ENCODE measurements at regions of chr3 and their contacts with region 1.

Region 1: DNA sequence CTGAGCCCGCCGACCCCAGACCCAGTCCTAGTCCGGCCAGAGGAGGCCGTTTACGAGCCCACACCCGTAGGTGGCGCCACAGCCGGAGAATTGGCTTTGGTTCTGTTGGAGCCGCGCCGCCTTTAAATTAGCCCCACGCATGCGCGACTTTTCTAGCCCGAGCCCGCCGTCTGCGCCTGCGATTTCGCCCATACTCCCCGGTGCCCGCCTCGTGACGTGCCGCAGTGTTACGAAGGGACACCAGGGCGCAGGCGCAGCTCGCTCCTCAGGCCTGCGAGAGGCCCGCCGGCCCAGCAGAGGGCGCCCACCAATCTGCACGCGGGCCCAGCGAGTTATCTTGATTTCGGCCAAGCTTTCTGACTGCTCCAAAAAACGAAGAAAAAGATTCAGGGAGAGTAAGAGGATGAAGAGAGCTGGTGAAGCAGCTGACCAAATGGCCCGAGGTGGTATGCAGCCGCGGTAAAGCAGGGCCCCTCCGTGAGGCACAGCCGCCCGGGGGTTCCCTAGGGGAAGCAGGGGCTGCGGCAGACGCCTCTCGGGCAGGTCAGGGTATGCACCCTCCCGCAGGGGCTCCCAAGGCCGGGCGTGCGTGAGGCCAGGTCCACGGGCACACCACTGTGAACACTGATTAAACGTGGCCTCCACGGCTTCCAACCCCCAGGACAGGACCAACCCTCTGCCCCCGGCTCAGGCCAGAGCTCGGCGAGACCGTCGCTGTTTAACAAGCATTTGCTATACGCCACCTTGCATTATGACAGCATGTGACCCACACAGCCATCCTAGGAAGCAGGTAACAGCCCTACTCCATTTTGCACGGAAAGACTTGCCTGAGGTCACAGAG is 32.8 kb downstream of the RPN1 start:
- DNase-seq: peak; percentile 100
- H3K4me3 ChIP-seq: peak overlapping the region; percentile 78 to 88
- H3K27ac ChIP-seq: peak overlapping the region; percentile 79 to 89; a peak in 3 of 4 replicates
- H3K4me1 ChIP-seq: peaks cover 15% of the 10 kb centered on the region in 2 experiments
- H3K27me3 ChIP-seq: no peaks in the 10 kb centered on the region
- CTCF ChIP-seq: peak; percentile 92
- EP300 ChIP-seq: no peak
- RAD21 ChIP-seq: peak; percentile 76

Region 2: DNA sequence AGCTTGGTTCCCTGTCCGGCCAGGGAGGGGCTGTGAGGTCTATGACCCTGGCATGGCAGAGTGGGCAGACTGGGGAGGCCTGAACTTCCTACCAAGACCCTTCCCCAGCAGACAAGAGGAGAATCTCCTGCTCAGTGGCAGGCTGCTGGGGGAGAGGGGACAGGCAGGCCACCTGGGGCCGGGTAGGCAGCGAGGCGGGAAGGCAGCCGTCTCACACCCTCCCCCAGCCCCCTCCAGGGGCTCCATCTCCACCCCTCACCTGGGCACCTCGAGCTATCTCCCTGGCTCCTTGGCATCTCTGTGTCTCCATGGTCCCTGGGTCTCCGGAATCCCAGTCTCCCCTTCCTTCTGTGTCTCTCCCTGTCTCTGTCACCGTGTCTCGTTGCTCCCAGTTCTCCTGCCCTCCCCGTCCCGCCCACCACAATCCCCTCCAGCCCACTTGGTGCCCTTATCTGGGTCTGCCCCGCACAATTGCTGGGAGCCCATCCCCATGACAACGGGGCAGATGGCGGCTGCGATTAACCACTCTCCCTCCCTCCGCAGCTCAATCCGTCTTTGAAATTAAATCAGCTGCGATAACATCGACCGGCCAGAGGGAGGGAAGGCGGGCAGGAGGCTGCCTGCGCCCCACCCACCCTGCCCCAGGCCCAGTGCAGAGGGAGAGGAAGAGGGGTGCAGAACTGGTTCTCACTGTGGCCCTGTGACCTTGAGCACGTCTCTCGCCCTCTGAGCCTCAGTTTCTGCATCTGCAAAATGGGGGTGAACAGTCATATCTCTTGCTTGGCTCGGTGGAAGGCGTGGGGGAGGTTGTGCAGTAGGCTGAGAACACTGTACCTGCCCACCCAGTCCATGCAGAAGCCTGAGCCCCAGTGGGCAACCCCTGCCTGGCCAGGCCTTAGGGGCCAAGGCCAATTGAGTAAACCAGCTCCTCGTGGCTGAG is 160.7 kb before region 1 on chr3:
- CTCF ChIA-PET with region 1: no interaction called
- POLR2A ChIA-PET with region 1: no interaction called
- DNase-seq: peak; percentile 96
- H3K4me3 ChIP-seq: peak overlapping the region in 1 of 2 experiments; percentile 50; a peak in 2 of 4 replicates
- H3K27ac ChIP-seq: peak overlapping the region in 1 of 2 experiments; percentile 100; a peak in 2 of 4 replicates
- H3K4me1 ChIP-seq: peaks cover 0 to 75% of the 10 kb centered on the region in 2 experiments; a peak in 1 of 4 replicates
- H3K27me3 ChIP-seq: peaks cover 5% of the 10 kb centered on the region; the same call in 1 of the 2 replicates
- CTCF ChIP-seq: no peak
- EP300 ChIP-seq: peak in 1 of 2 experiments; percentile 98; a peak in 2 of 4 replicates
- RAD21 ChIP-seq: peak; percentile 25

Region 3: GRCh38 chr3:128607710-128608048 is 10.1 kb before region 1 on chr3:
- CTCF ChIA-PET with region 1: interaction called, 53 read pairs
- POLR2A ChIA-PET with region 1: no interaction called
- DNase-seq: no peak
- H3K4me3 ChIP-seq: no peak overlapping the region
- H3K27ac ChIP-seq: no peak overlapping the region
- H3K4me1 ChIP-seq: peaks cover 0 to 22% of the 10 kb centered on the region in 2 experiments; a peak in 1 of 4 replicates
- H3K27me3 ChIP-seq: no peaks in the 10 kb centered on the region
- CTCF ChIP-seq: no peak
- EP300 ChIP-seq: no peak
- RAD21 ChIP-seq: no peak

Region 4: GRCh38 chr3:128650096-128651050 is 32.6 kb after region 1 on chr3 and contains the start of gene RPN1:
- CTCF ChIA-PET with region 1: interaction called, 10 read pairs
- POLR2A ChIA-PET with region 1: interaction called, 5 read pairs
- DNase-seq: peak; percentile 98
- H3K4me3 ChIP-seq: peak within 1 kb of the TSS; percentile 88 to 100
- H3K27ac ChIP-seq: peak within 1 kb of the TSS; percentile 85 to 92
- H3K4me1 ChIP-seq: no peaks in the 10 kb centered on the region; a peak in 1 of 4 replicates
- H3K27me3 ChIP-seq: no peaks in the 10 kb centered on the region
- CTCF ChIP-seq: no peak
- EP300 ChIP-seq: no peak
- RAD21 ChIP-seq: no peak
- polyA plus RNA-seq, gene RPN1: 162 and 183 TPM in 2 replicates

Region 5: GRCh38 chr3:128845778-128846485 is 228.2 kb after region 1 on chr3:
- CTCF ChIA-PET with region 1: interaction called, 50 read pairs
- POLR2A ChIA-PET with region 1: no interaction called
- DNase-seq: peak; percentile 94
- H3K4me3 ChIP-seq: peak overlapping the region; percentile 52 to 58
- H3K27ac ChIP-seq: peak overlapping the region in 1 of 2 experiments; percentile 53; a peak in 2 of 4 replicates
- H3K4me1 ChIP-seq: peaks cover 5 to 30% of the 10 kb centered on the region in 2 experiments; a peak in 1 of 4 replicates
- H3K27me3 ChIP-seq: no peaks in the 10 kb centered on the region
- CTCF ChIP-seq: peak; percentile 67
- EP300 ChIP-seq: no peak
- RAD21 ChIP-seq: peak; percentile 61

Region 6: GRCh38 chr3:128879125-128879969 is 261.6 kb after region 1 on chr3 and contains the start of gene ACAD9:
- CTCF ChIA-PET with region 1: interaction called, 10 read pairs
- POLR2A ChIA-PET with region 1: no interaction called
- DNase-seq: peak; percentile 99
- H3K4me3 ChIP-seq: peak within 1 kb of the TSS; percentile 81 to 95
- H3K27ac ChIP-seq: peak within 1 kb of the TSS; percentile 92 to 93
- H3K4me1 ChIP-seq: peaks cover 0 to 24% of the 10 kb centered on the region in 2 experiments; a peak in 2 of 4 replicates
- H3K27me3 ChIP-seq: no peaks in the 10 kb centered on the region
- CTCF ChIP-seq: no peak
- EP300 ChIP-seq: peak in 1 of 2 experiments; percentile 35; a peak in 1 of 4 replicates
- RAD21 ChIP-seq: no peak; the same call in 1 of the 2 replicates
- polyA plus RNA-seq, gene ACAD9: 38.2 and 41.9 TPM in 2 replicates